Heart left ventricle (tissue), 16 donors: ENCODE measurements at regions of chr12 and their contacts with region 1.

Region 1: DNA sequence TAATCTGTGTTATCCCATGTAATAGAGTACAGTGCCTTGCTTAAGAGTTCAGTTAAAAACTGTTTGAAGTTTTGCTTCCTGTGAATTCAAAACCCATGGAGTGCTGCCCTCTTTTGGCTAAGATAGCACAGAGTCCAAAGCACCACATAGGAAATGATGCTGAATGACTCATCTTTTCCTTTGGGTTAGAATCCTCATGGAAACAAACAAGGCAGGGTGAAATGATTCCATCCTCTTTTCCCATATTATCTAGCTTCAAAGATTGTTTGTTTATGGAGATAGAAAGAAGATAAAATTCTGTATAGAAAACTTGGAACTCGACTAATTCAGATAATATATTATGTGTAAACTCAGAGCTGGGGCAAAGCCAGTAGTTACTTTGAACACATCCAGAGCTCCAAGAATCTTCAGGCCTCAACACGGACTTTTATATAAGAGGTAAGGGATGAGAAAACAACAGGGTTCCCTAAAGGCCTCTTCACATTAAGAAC is 87.4 kb downstream of the OTOGL start:
- DNase-seq: peak in 3 of 5 donors; percentile 35 to 71 (median 63)
- ATAC-seq: peak; percentile 88 to 96 (median 92)
- H3K4me3 ChIP-seq: no peak overlapping the region
- H3K27ac ChIP-seq: peak overlapping the region; percentile 78 to 91 (median 86)
- H3K4me1 ChIP-seq: peaks cover 0 to 38% (median 16%) of the 10 kb centered on the region in 12 donors
- H3K27me3 ChIP-seq: no peaks in the 10 kb centered on the region
- CTCF ChIP-seq: peak; percentile 54 to 92 (median 79)
- POLR2A ChIP-seq: no peak

Region 2: GRCh38 chr12:79407671-79408622 is 778.8 kb before region 1 on chr12:
- intact Hi-C with region 1: loop called in 1 of 10 experiments (anchors 10 kb)
- DNase-seq: peak in 4 of 5 donors; percentile 21 to 33 (median 28)
- ATAC-seq: peak; percentile 48 to 74 (median 67)
- H3K4me3 ChIP-seq: no peak overlapping the region
- H3K27ac ChIP-seq: no peak overlapping the region
- H3K4me1 ChIP-seq: no peaks in the 10 kb centered on the region
- H3K27me3 ChIP-seq: no peaks in the 10 kb centered on the region
- CTCF ChIP-seq: peak; percentile 27 to 71 (median 50)
- POLR2A ChIP-seq: no peak

Region 3: GRCh38 chr12:79555028-79555930 is 631.5 kb before region 1 on chr12:
- intact Hi-C with region 1: loop called (anchors 2 to 5 kb)
- DNase-seq: no peak
- ATAC-seq: peak in 1 of 4 donors; percentile 45
- H3K4me3 ChIP-seq: no peak overlapping the region
- H3K27ac ChIP-seq: peak overlapping the region in 1 of 12 donors; percentile 38
- H3K4me1 ChIP-seq: peaks cover 0 to 45% (median 7%) of the 10 kb centered on the region in 12 donors
- H3K27me3 ChIP-seq: no peaks in the 10 kb centered on the region
- CTCF ChIP-seq: peak; percentile 31 to 80 (median 62)
- POLR2A ChIP-seq: no peak

Region 4: DNA sequence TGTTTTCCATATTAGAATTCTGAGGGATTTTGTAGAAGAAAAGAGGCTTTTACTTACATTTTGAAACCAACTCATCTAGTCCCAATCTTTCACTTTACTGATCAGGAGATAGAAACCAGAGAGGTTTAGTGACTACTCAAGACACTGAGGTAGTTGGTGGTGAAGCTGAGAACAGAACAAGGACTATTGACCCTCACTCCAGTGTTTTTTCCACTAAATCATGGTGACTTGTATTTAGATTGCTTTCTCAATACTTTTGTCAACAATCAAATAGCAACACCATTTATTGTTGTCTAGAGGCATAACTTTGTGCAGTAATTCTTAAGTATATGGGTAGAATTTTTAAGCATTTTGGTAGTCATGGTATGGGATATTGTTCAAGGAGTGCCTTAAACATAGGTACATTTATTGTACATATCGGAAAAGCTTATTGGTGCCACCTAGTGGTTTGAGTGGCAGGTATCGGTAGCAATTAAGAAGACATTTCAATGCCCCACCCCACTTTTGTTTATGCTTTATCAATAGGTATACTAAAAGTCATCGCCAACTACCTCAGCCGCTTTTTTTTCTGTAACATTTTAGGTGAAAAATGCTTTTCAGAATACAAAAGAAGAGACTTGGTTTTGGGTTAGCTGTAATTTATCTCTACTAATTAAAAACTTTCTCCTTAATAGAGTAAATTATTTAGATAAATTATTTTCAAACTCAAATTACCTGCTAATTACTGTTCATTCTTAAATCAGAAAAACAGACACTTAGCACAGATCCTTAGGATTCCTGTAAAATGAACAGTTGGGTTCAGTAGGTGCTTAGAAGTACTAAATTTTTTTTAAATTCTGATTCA is 448.7 kb before region 1 on chr12:
- intact Hi-C with region 1: loop called in 2 of 10 experiments (anchors 10 kb)
- DNase-seq: no peak
- ATAC-seq: no peak
- H3K4me3 ChIP-seq: no peak overlapping the region
- H3K27ac ChIP-seq: no peak overlapping the region
- H3K4me1 ChIP-seq: peaks cover 0 to 3% (median 0%) of the 10 kb centered on the region in 12 donors
- H3K27me3 ChIP-seq: no peaks in the 10 kb centered on the region
- CTCF ChIP-seq: peak; percentile 46 to 73 (median 64)
- POLR2A ChIP-seq: no peak

Region 5: GRCh38 chr12:79776111-79776510 is 410.7 kb before region 1 on chr12:
- intact Hi-C with region 1: loop called in 1 of 10 experiments (anchors 10 kb)
- DNase-seq: no peak
- ATAC-seq: peak in 1 of 4 donors; percentile 63
- H3K4me3 ChIP-seq: no peak overlapping the region
- H3K27ac ChIP-seq: peak overlapping the region in 11 of 12 donors; percentile 1 to 44 (median 23)
- H3K4me1 ChIP-seq: peaks cover 0 to 21% (median 9%) of the 10 kb centered on the region in 12 donors
- H3K27me3 ChIP-seq: no peaks in the 10 kb centered on the region
- CTCF ChIP-seq: no peak
- POLR2A ChIP-seq: no peak

Region 6: GRCh38 chr12:79935021-79935623 is 251.7 kb before region 1 on chr12 and contains the start of gene PPP1R12A:
- intact Hi-C with region 1: loop called in 9 of 10 experiments (anchors 1 to 10 kb)
- DNase-seq: peak; percentile 98 to 99 (median 98)
- ATAC-seq: peak; percentile 98
- H3K4me3 ChIP-seq: peak within 1 kb of the TSS; percentile 65 to 98 (median 90)
- H3K27ac ChIP-seq: peak within 1 kb of the TSS; percentile 95 to 99 (median 97)
- H3K4me1 ChIP-seq: peaks cover 0 to 49% (median 38%) of the 10 kb centered on the region in 12 donors
- H3K27me3 ChIP-seq: no peaks in the 10 kb centered on the region
- CTCF ChIP-seq: peak in 7 of 12 donors; percentile 6 to 42 (median 25)
- POLR2A ChIP-seq: peak; percentile 26 to 94
- total RNA-seq, gene PPP1R12A: 42.3 to 77.8 (median 54.9) TPM

Region 7: DNA sequence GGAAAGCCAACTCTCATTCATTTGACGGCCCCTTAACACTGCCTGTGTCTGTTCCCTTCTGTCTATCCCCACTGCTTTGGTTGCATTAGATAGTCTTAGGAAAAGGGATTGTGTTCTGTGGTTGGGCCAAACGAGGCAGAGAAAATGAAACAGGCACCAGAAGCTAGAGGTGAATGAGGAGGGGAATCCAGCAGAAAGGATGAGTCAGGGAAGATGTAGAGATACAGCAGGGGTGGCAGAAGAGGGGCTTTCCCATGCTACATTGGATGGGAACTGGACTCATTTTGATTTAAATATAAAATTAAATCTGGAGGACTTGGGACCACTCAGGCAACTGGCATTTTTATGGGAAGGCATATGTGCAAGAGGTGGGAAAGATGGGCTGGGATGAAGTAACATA is 44.1 kb before region 1 on chr12:
- intact Hi-C with region 1: no loop called
- DNase-seq: no peak
- ATAC-seq: no peak
- H3K4me3 ChIP-seq: no peak overlapping the region
- H3K27ac ChIP-seq: no peak overlapping the region
- H3K4me1 ChIP-seq: no peaks in the 10 kb centered on the region
- H3K27me3 ChIP-seq: no peaks in the 10 kb centered on the region
- CTCF ChIP-seq: no peak
- POLR2A ChIP-seq: no peak